ENCODE measurements at regions of chr1 and their contacts with region 1.

Region 1: GRCh38 chr1:110495926-110496600 is 22.9 kb downstream of the KCNA10 start:
- DNase-seq: peak; percentile 87
- ATAC-seq: peak; percentile 86
- H3K4me3 Mint-ChIP-seq: no peak overlapping the region
- H3K27ac Mint-ChIP-seq: no peak overlapping the region
- H3K4me1 Mint-ChIP-seq: peaks cover 6% of the 10 kb centered on the region
- H3K27me3 Mint-ChIP-seq: no peaks in the 10 kb centered on the region

Region 2: GRCh38 chr1:110209715-110210603 is 286.1 kb before region 1 on chr1 and contains the start of gene KCNC4:
- CTCF ChIA-PET with region 1: interaction called, 140 read pairs
- DNase-seq: peak; percentile 96
- ATAC-seq: peak; percentile 93
- H3K4me3 Mint-ChIP-seq: peak within 1 kb of the TSS; percentile 79
- H3K27ac Mint-ChIP-seq: peak within 1 kb of the TSS; percentile 91
- H3K4me1 Mint-ChIP-seq: peaks cover 44% of the 10 kb centered on the region
- H3K27me3 Mint-ChIP-seq: peaks cover 13% of the 10 kb centered on the region
- total RNA-seq, gene KCNC4: 4.8 to 9.6 TPM

Region 3: DNA sequence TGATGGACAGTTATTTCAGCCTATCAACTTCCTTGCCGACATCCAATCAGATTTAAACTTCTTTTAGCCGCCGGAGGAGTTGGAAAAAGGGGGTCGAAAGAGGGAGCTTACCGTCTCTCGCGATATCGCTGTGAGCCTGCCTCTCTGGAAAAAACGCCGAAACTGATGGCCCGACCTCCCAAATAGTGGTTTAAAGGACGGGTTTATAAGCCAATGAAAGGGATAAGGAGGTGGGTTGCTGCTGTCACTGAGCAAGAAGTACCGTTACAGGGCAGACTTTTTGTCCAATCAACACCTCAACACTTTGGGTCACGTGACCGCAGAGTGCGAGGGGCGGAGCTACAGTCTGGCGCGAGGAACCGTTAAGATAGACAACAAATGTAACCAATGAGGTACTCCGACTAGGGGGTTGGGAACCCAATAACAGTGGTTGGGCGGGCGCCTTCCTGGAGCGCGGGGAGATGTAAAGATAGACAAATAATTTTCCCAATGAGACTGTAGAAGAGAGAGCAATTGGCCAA is 157.1 kb before region 1 on chr1 and contains the start of gene RBM15:
- CTCF ChIA-PET with region 1: interaction called, 10 read pairs
- DNase-seq: peak; percentile 99
- ATAC-seq: peak; percentile 80
- H3K4me3 Mint-ChIP-seq: no peak within 1 kb of the TSS
- H3K27ac Mint-ChIP-seq: no peak within 1 kb of the TSS
- H3K4me1 Mint-ChIP-seq: peaks cover 49% of the 10 kb centered on the region
- H3K27me3 Mint-ChIP-seq: no peaks in the 10 kb centered on the region
- total RNA-seq, gene RBM15: 76.5 to 122 TPM

Region 4: DNA sequence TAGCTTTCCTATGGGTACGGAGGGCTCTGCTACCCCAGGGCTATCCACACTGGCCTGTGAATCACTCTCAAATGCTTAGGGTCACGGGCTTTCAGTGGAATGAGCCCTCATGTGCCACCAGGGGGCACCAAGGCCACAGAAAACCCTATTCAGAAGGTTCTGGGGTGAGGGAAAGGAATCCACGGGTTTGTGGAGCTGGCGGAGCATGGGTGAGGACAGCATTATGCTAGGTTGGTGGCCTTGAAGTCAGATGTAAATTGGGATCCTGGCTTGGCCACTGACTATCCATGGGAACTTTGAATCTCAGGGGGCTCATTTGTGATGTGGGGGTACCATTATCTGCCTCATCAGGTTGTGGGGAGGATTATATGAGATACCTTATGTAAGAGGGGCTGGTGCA is 83.5 kb before region 1 on chr1:
- CTCF ChIA-PET with region 1: interaction called, 42 read pairs
- DNase-seq: peak; percentile 73
- ATAC-seq: peak; percentile 57
- H3K4me3 Mint-ChIP-seq: no peak overlapping the region
- H3K27ac Mint-ChIP-seq: no peak overlapping the region
- H3K4me1 Mint-ChIP-seq: peaks cover 16% of the 10 kb centered on the region
- H3K27me3 Mint-ChIP-seq: no peaks in the 10 kb centered on the region

Region 5: GRCh38 chr1:110466646-110467280 is 29.3 kb before region 1 on chr1:
- CTCF ChIA-PET with region 1: interaction called, 28 read pairs
- DNase-seq: no peak
- ATAC-seq: no peak
- H3K4me3 Mint-ChIP-seq: no peak overlapping the region
- H3K27ac Mint-ChIP-seq: no peak overlapping the region
- H3K4me1 Mint-ChIP-seq: no peaks in the 10 kb centered on the region
- H3K27me3 Mint-ChIP-seq: peaks cover 17% of the 10 kb centered on the region

Region 6: GRCh38 chr1:110554871-110555801 is 59.1 kb after region 1 on chr1:
- CTCF ChIA-PET with region 1: interaction called, 12 read pairs
- DNase-seq: peak; percentile 64
- ATAC-seq: peak; percentile 90
- H3K4me3 Mint-ChIP-seq: no peak overlapping the region
- H3K27ac Mint-ChIP-seq: no peak overlapping the region
- H3K4me1 Mint-ChIP-seq: peaks cover 8% of the 10 kb centered on the region
- H3K27me3 Mint-ChIP-seq: peaks cover 54% of the 10 kb centered on the region

Region 7: DNA sequence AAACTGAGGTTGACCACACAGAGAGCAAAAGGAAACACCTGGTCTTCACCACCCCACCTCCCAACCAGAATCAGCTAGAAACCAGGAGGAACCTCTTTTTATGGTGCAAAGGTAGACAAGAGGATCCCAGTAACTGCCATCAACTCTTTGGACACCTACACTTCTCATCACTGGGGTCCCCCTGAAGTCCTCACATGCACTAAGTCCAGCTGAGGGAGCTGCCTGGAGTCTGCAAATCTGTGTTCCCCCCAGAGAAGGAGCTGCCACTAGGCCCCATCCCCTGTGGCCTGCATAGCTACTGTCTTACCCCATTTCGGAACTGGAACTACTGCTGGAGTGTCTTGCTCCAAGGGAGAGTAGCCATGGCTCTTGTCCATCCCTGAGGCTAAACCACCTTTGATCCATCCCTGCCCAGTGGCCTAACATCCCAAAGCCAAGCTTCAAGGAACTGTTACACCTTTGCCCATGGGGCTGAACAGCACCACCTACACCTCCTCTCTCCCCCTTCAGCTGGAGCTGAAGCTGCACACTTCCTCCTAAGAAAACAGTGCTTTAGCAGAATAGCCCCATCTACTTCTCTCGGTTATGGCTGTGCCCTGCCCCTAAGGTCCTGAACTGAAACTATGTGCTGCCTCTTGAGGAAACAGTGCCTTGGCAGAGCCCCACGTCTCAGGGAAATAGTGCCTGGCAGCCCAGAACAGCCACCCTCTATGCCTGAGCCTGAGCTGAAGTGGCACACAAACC is 291.4 kb after region 1 on chr1:
- CTCF ChIA-PET with region 1: interaction called, 14 read pairs
- DNase-seq: peak; percentile 89
- ATAC-seq: peak; percentile 82
- H3K4me3 Mint-ChIP-seq: peak overlapping the region; percentile 66
- H3K27ac Mint-ChIP-seq: peak overlapping the region; percentile 96
- H3K4me1 Mint-ChIP-seq: peaks cover 64% of the 10 kb centered on the region
- H3K27me3 Mint-ChIP-seq: no peaks in the 10 kb centered on the region

Measured in activated CD8-positive, alpha-beta memory T cell treated with anti-CD3 and anti-CD28 coated beads, Interleukin-2, amount 10 ng/mL, durations not matched to agents 7 days and 5 days (primary cell).